ENCODE measurements at regions of chr12 and their contacts with region 1.

Region 1: DNA sequence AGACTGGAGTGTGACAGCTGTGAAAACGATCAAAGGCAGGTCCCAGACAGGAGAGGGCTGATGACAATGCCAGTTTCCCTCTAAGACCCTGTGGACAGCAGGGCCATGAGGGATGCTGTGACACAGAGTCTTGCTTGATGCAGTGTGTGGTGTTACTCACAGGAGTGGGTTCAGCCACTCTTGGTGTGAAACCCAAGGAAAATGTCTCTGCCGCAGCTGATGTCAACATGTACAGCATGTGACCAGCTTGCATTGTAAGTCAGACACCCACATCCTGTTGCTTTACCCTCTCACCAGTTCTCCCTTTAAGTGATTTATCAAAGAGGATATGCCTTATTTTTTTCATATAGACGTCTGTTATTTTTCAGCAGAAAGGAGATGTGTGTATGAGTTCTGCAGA is 268.6 kb downstream of the BTG1 start:
- DNase-seq: peak; percentile 75
- H3K4me3 Mint-ChIP-seq: peak overlapping the region; percentile 54
- H3K27ac Mint-ChIP-seq: peak overlapping the region; percentile 94
- H3K4me1 Mint-ChIP-seq: peaks cover 48% of the 10 kb centered on the region
- H3K27me3 Mint-ChIP-seq: no peaks in the 10 kb centered on the region

Region 2: DNA sequence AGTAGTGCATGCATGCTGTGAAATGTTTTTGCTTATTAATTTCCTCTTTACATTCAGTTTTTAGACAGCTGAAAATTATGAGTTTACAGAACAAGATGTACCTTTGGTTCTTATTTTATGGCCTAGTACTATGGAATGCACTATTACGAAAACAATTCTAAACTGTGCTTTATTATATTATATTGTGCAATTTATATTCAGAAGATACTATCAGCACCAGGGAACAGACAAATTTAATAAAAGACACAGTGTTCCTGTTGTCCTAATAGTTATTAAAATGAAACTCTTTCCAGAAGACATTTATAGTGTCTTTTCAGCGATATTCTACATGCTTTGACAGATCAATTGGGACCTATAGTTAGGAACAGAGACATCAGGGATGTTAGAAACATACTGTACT is 158.7 kb before region 1 on chr12:
- intact Hi-C with region 1: no loop called
- DNase-seq: no peak
- H3K4me3 Mint-ChIP-seq: no peak overlapping the region
- H3K27ac Mint-ChIP-seq: no peak overlapping the region
- H3K4me1 Mint-ChIP-seq: peaks cover 2% of the 10 kb centered on the region
- H3K27me3 Mint-ChIP-seq: no peaks in the 10 kb centered on the region

Region 3: DNA sequence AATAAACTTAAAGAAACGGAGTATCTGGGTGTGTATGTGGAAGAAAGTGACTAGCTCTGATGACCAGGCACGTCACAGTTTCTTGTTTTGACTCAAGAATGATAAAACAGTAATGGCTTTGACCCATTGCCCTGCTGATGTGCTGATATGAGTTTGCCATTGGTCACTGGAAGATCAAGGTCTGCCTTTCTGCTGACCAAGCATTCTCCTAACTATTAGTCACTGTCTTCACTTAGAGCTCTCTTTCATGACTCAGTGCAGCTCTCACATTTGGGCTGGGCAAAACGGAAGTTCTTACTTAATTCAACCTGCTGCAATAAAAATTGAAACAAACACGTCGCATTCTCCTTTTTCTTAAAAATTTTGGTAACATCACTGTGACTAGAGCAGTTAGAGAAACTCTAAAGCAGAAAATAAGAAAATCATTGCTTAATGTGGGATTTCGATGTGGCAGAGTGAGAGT is 98.1 kb before region 1 on chr12:
- intact Hi-C with region 1: loop called (anchors 2 kb)
- DNase-seq: peak; percentile 17
- H3K4me3 Mint-ChIP-seq: peak overlapping the region; percentile 62
- H3K27ac Mint-ChIP-seq: peak overlapping the region; percentile 70
- H3K4me1 Mint-ChIP-seq: peaks cover 24% of the 10 kb centered on the region
- H3K27me3 Mint-ChIP-seq: peaks cover 4% of the 10 kb centered on the region

Region 4: DNA sequence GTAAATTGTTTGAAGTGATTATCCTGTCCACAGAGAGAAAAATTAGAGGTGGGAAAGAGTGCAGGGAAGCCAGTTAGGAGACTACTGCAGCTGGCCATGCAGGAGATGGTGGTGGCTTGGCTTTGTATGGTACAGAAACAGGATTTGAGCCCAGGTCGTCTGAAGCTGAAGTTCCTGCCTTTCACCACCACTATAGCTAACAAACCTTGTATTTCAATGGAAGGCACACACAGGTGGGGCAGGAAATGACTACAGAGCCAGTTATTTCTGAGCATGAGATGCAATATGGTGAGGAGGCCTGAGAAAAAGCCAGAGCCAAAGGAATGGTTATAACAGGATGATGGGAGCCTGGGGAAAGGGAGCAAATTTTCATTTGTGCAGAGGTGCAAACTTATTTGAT is 164.7 kb after region 1 on chr12:
- intact Hi-C with region 1: loop called (anchors 5 kb)
- DNase-seq: no peak
- H3K4me3 Mint-ChIP-seq: no peak overlapping the region
- H3K27ac Mint-ChIP-seq: no peak overlapping the region
- H3K4me1 Mint-ChIP-seq: peaks cover 68% of the 10 kb centered on the region
- H3K27me3 Mint-ChIP-seq: no peaks in the 10 kb centered on the region

Region 5: DNA sequence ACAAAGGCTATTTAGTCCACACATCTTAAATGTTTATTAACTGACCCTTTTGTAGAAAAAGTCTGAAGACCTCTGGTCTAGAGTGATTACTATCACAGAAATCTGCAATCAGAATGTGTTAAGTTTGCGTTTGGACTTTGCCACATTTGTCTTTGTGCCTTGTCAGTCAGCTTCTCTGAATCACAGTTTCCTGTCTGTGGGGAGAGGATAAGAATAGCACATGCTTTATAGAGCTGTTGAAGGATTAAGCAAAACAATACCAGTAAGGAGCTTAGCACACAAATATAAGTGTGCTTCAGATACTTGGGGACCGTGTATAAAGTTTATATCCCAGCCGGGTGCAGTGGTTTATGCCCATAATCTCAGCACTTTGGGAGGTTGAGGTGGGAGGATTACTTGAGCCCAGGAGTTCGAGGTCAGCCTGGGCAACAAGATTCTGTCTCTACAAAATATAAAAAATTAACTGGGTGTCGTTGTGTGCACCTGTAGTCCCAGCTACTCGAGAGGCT is 331.6 kb after region 1 on chr12:
- intact Hi-C with region 1: loop called (anchors 5 kb)
- DNase-seq: peak; percentile 19
- H3K4me3 Mint-ChIP-seq: peak overlapping the region; percentile 22
- H3K27ac Mint-ChIP-seq: peak overlapping the region; percentile 24
- H3K4me1 Mint-ChIP-seq: peaks cover 37% of the 10 kb centered on the region
- H3K27me3 Mint-ChIP-seq: no peaks in the 10 kb centered on the region

Measured in activated T-helper 2 cell treated with anti-CD3 and anti-CD28 coated beads, Interferon-gamma antibody, Interleukin-2, Interleukin-4, amounts not matched to agents 10 μg/mL and 5 μg/mL and 100 μg/mL, durations not matched to agents 14 hours and 24 hours and 36 hours (primary cell).